Activated T-helper 2 cell treated with anti-CD3 and anti-CD28 coated beads, Interferon-gamma antibody, Interleukin-2, Interleukin-4, amounts not matched to agents 10 μg/mL and 5 μg/mL and 100 μg/mL, durations not matched to agents 14 hours and 24 hours and 36 hours (primary cell): ENCODE measurements at regions of chr2 and their contacts with region 1.

Region 1: DNA sequence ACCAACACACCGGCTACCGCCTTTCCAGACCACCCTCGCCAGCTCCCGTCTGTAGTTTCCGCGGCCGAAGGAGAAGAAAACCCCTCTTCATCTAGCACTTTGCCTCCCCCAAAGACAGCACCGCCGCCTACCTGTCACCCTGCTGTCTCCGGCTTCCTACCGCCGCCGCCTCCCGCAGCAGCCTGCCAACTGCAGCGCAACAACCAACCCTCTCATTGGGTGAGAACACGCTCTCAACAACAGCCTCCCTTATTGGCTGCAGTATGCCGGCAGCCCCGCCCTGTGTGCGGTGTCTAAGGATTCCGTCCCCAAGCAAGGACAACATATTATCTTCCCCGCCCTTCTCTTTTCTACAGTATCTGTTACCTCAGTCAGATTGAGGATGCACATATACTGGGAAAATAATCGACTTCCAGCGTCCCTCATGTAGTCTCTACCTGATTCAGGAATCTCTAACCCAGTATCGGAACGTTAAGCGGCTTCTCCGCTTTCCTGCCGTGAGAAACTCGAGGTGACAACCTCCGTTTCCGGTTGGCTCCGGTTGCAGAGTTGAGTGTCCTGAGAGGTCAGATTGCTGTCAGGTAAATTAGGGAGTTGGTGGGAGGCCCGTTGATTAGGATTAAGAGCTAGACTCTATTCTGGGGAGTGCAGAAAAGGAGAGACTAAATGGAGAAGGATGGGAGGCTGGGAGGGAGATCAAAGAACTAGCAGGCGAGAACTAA is at the starts of genes HYCC2 and NDUFB3:
- DNase-seq: peak; percentile 92
- H3K4me3 Mint-ChIP-seq: peak within 1 kb of the TSS; percentile 93
- H3K27ac Mint-ChIP-seq: peak within 1 kb of the TSS; percentile 93
- H3K4me1 Mint-ChIP-seq: peaks cover 37% of the 10 kb centered on the region
- H3K27me3 Mint-ChIP-seq: no peaks in the 10 kb centered on the region
- total RNA-seq, gene HYCC2: 20.1 and 23.8 TPM in 2 replicates
- total RNA-seq, gene NDUFB3: 123 and 125 TPM in 2 replicates

Region 2: DNA sequence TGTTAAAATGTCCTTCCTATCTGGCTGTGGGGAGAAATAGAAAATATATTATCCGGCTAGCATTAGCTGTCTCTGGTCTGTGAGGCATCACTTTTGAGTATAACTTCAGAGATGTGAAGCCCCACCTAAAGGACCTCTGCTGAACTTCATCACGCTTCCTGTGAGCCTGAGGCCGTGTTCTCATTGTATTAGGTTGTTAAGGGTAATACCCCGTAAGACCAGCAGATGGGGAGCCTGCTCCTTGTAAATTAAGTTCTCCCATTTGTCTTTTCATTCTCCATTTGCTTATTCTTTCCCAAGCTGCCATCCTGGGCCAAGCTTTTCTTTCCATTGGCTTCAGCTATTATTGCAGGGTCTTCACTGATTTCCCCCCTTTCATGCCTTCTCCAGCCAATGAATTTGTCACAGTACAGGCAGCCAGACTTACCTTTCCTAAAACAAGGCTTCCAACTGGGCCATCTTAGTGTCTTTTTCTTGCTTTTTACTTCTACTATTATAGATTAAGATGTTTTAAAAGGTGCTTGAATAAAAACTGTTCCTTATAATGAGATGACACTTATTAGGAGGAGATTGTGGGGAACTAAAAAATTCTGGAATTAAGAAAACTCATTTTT is 170.1 kb before region 1 on chr2:
- intact Hi-C with region 1: loop called (anchors 1 kb)
- DNase-seq: peak; percentile 69
- H3K4me3 Mint-ChIP-seq: no peak overlapping the region
- H3K27ac Mint-ChIP-seq: peak overlapping the region; percentile 76
- H3K4me1 Mint-ChIP-seq: peaks cover 13% of the 10 kb centered on the region
- H3K27me3 Mint-ChIP-seq: no peaks in the 10 kb centered on the region

Region 3: DNA sequence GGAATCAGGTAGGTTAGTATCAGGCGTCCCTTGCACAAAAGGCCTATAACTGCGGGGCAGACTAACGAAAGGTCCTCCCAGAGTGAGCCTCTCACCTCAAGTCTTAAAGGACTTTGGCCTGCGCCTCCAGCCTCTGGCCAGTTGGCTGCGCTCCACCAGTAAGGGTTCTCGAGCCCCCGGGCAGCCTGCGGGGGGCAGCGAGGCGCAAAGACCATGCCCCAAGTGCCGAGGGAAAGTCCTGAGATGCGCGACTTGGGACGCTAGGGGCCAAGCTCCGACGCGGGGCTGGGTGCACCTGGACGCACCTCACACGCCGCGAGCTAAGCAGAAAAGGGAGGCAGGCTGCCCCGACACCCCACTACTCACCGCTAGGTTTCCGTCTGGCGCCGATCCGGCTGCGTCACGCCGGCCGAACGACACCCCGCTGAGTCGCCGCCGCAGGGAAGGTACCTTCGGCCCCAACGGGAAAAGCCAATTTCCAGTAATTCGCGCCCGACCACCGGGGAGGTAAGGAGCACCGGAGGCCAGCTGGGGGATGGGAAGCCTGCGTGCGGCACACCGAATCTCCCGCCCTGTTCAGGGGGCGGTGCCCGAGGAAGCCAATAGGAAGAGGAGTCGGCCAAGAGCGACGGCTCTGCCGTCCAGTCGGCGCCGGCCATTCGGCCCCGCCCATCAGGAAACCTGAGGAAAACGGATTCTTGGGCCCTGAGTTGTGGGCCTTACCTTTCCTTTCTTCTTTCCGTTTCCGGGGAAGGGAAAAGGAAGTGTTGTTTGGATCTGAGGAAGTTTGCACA is 108.3 kb before region 1 on chr2 and contains the start of gene ORC2:
- intact Hi-C with region 1: loop called (anchors 1 kb)
- DNase-seq: peak; percentile 91
- H3K4me3 Mint-ChIP-seq: peak within 1 kb of the TSS; percentile 96
- H3K27ac Mint-ChIP-seq: peak within 1 kb of the TSS; percentile 86
- H3K4me1 Mint-ChIP-seq: peaks cover 53% of the 10 kb centered on the region
- H3K27me3 Mint-ChIP-seq: no peaks in the 10 kb centered on the region
- total RNA-seq, gene ORC2: 50.7 and 62.9 TPM in 2 replicates

Region 4: GRCh38 chr2:201021914-201022313 is 49.7 kb before region 1 on chr2:
- intact Hi-C with region 1: loop called (anchors 5 kb)
- DNase-seq: no peak
- H3K4me3 Mint-ChIP-seq: no peak overlapping the region
- H3K27ac Mint-ChIP-seq: peak overlapping the region; percentile 39
- H3K4me1 Mint-ChIP-seq: peaks cover 16% of the 10 kb centered on the region
- H3K27me3 Mint-ChIP-seq: no peaks in the 10 kb centered on the region

Region 5: GRCh38 chr2:201118121-201118960 is 46.7 kb after region 1 on chr2:
- intact Hi-C with region 1: loop called (anchors 1 kb)
- DNase-seq: peak; percentile 76
- H3K4me3 Mint-ChIP-seq: peak overlapping the region; percentile 94
- H3K27ac Mint-ChIP-seq: peak overlapping the region; percentile 95
- H3K4me1 Mint-ChIP-seq: peaks cover 42% of the 10 kb centered on the region
- H3K27me3 Mint-ChIP-seq: no peaks in the 10 kb centered on the region

Region 6: DNA sequence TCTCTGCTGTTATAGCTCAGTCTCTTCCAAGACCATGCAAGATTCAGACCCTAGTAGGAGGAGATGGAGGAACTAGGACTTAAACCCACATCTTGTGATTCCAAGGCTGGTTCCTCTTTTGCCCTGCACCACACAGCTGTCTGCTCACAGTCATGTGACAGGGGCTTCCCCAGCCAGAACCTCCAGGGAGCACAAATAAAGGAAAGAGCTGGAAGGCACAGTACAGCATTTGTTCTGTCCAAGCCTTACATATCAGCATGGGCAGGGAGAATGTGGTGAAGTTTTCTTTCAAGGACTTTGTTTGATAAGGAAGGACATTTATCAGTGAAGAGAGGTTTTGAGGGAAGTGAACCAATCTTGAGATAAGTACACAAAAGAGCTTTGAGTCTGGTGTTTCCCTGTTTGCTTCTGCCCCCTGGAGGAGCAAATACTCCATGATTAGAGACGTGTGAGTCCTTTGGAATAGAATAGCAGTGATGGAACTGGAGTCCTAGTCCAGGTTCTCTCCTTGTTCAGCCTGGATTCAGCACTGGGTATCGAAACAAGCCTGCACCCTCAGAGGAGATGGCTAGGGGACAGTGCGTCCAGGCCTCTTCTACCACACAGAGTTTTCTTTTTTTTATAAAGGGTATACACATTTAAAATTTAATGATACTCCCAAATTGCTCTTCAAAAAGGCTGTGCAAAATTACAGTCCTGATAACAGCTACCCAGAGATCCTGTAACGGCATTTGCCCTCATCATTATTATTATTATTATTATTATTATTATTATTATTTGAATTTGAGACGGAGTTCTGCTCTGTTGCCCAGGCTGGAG is 86.7 kb after region 1 on chr2:
- intact Hi-C with region 1: loop called (anchors 2 kb)
- DNase-seq: peak; percentile 49
- H3K4me3 Mint-ChIP-seq: no peak overlapping the region
- H3K27ac Mint-ChIP-seq: peak overlapping the region; percentile 40
- H3K4me1 Mint-ChIP-seq: peaks cover 14% of the 10 kb centered on the region
- H3K27me3 Mint-ChIP-seq: no peaks in the 10 kb centered on the region

Region 7: DNA sequence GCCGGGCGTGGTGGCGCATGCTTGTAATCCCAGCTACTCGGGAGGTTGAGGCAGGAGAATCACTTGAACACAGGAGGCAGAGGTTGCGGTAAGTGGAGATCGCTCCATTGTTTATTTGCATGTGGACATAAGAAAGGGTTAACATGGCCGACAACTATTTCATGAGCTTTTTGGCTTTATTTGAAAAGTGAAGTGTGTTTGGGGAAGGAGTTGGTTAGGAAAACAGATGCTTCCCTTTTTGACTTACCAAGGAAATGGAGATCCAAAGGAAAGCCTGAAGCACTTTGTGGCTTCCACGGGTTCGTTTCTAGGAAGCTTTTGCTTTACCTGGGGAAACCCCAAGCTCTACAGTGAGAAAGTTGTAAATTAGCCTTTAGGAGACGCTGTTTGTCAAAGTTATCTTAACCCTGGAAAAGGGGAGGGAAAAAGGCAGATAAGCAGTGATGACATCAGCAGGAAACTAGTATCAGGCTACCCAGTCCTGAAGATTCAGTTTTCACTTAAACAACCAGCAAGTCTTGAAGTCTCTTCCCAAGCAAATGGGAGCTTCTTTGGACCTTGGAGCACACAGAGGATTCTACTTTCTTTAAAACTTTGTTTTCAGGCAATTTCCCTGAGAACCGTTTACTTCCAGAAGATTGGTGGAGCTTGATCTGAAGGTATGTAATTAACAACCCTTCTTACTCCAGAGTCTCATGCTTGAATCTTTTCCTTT is 111.2 kb after region 1 on chr2 and contains the start of gene CASP10:
- intact Hi-C with region 1: loop called (anchors 1 kb)
- DNase-seq: peak; percentile 32
- H3K4me3 Mint-ChIP-seq: peak within 1 kb of the TSS; percentile 96
- H3K27ac Mint-ChIP-seq: peak within 1 kb of the TSS; percentile 93
- H3K4me1 Mint-ChIP-seq: peaks cover 43% of the 10 kb centered on the region
- H3K27me3 Mint-ChIP-seq: no peaks in the 10 kb centered on the region
- total RNA-seq, gene CASP10: 14.3 and 17.3 TPM in 2 replicates